Activated B cell treated with CpG ODN at 0.5 μM for 24 hours (primary cell): ENCODE measurements at regions of chr1 and their contacts with region 1.

Region 1: GRCh38 chr1:95116580-95117206 is 462 bp upstream of the TLCD4 start:
- DNase-seq: peak; percentile 31
- ATAC-seq: peak; percentile 82
- H3K4me3 Mint-ChIP-seq: peak overlapping the region; percentile 93
- H3K27ac Mint-ChIP-seq: peak overlapping the region; percentile 74
- H3K4me1 Mint-ChIP-seq: peaks cover 7% of the 10 kb centered on the region
- H3K27me3 Mint-ChIP-seq: peaks cover 41% of the 10 kb centered on the region
- CTCF ChIP-seq: peak; percentile 76

Region 2: GRCh38 chr1:95072532-95073419 is 43.9 kb before region 1 on chr1 and contains the start of gene ALG14:
- CTCF ChIA-PET with region 1: interaction called, 3 read pairs
- POLR2A ChIA-PET with region 1: interaction called, 4 read pairs
- intact Hi-C with region 1: loop called (anchors 1 kb)
- DNase-seq: peak; percentile 88
- ATAC-seq: peak; percentile 96
- H3K4me3 Mint-ChIP-seq: peak within 1 kb of the TSS; percentile 100
- H3K27ac Mint-ChIP-seq: peak within 1 kb of the TSS; percentile 99
- H3K4me1 Mint-ChIP-seq: peaks cover 20% of the 10 kb centered on the region
- H3K27me3 Mint-ChIP-seq: peaks cover 3% of the 10 kb centered on the region
- CTCF ChIP-seq: no peak
- total RNA-seq, gene ALG14: 3.7 and 7.5 TPM in 2 replicates

Region 3: GRCh38 chr1:95084317-95085176 is 32.1 kb before region 1 on chr1:
- CTCF ChIA-PET with region 1: interaction called, 4 read pairs
- POLR2A ChIA-PET with region 1: no interaction called
- intact Hi-C with region 1: loop called (anchors 1 kb)
- DNase-seq: no peak
- ATAC-seq: peak; percentile 82
- H3K4me3 Mint-ChIP-seq: no peak overlapping the region
- H3K27ac Mint-ChIP-seq: no peak overlapping the region
- H3K4me1 Mint-ChIP-seq: peaks cover 4% of the 10 kb centered on the region
- H3K27me3 Mint-ChIP-seq: peaks cover 12% of the 10 kb centered on the region
- CTCF ChIP-seq: no peak

Region 4: GRCh38 chr1:95095833-95096217 is 20.9 kb before region 1 on chr1:
- CTCF ChIA-PET with region 1: no interaction called
- POLR2A ChIA-PET with region 1: no interaction called
- intact Hi-C with region 1: loop called (anchors 2 kb)
- DNase-seq: no peak
- ATAC-seq: peak; percentile 64
- H3K4me3 Mint-ChIP-seq: no peak overlapping the region
- H3K27ac Mint-ChIP-seq: peak overlapping the region; percentile 1
- H3K4me1 Mint-ChIP-seq: peaks cover 9% of the 10 kb centered on the region
- H3K27me3 Mint-ChIP-seq: peaks cover 9% of the 10 kb centered on the region
- CTCF ChIP-seq: no peak

Region 5: GRCh38 chr1:95223110-95223509 is 106.4 kb after region 1 on chr1:
- CTCF ChIA-PET with region 1: no interaction called
- POLR2A ChIA-PET with region 1: no interaction called
- intact Hi-C with region 1: no loop called
- DNase-seq: no peak
- ATAC-seq: no peak
- H3K4me3 Mint-ChIP-seq: no peak overlapping the region
- H3K27ac Mint-ChIP-seq: no peak overlapping the region
- H3K4me1 Mint-ChIP-seq: no peaks in the 10 kb centered on the region
- H3K27me3 Mint-ChIP-seq: peaks cover 7% of the 10 kb centered on the region
- CTCF ChIP-seq: no peak